CD4-positive, alpha-beta T cell (primary cell): ENCODE measurements at regions of chr1 and their contacts with region 1.

Region 1: GRCh38 chr1:8409106-8409505 is 91.2 kb downstream of the SLC45A1 start:
- DNase-seq: peak in 3 of 14 experiments; percentile 49 to 72 (median 63)
- ATAC-seq: peak; percentile 79
- H3K4me3 ChIP-seq: no peak overlapping the region
- H3K4me3 Mint-ChIP-seq: peak overlapping the region; percentile 65
- H3K27ac ChIP-seq: peak overlapping the region; percentile 19 to 23
- H3K27ac Mint-ChIP-seq: peak overlapping the region; percentile 69
- H3K4me1 ChIP-seq: peaks cover 69% of the 10 kb centered on the region
- H3K4me1 Mint-ChIP-seq: peaks cover 76% of the 10 kb centered on the region
- H3K27me3 ChIP-seq: no peaks in the 10 kb centered on the region
- H3K27me3 Mint-ChIP-seq: no peaks in the 10 kb centered on the region
- CTCF ChIP-seq: peak; percentile 48

Region 2: GRCh38 chr1:8396786-8397406 is 12.2 kb before region 1 on chr1:
- CTCF ChIA-PET with region 1: interaction called, 25 read pairs
- POLR2A ChIA-PET with region 1: interaction called, 5 read pairs
- intact Hi-C with region 1: no loop called
- DNase-seq: peak in 3 of 14 experiments; percentile 32 to 46 (median 35)
- ATAC-seq: peak; percentile 61
- H3K4me3 ChIP-seq: no peak overlapping the region
- H3K4me3 Mint-ChIP-seq: peak overlapping the region; percentile 39
- H3K27ac ChIP-seq: peak overlapping the region; percentile 8 to 18
- H3K27ac Mint-ChIP-seq: peak overlapping the region; percentile 88
- H3K4me1 ChIP-seq: peaks cover 52% of the 10 kb centered on the region
- H3K4me1 Mint-ChIP-seq: peaks cover 75% of the 10 kb centered on the region
- H3K27me3 ChIP-seq: no peaks in the 10 kb centered on the region
- H3K27me3 Mint-ChIP-seq: no peaks in the 10 kb centered on the region
- CTCF ChIP-seq: no peak

Region 3: GRCh38 chr1:8431019-8431418 is 21.9 kb after region 1 on chr1:
- CTCF ChIA-PET with region 1: interaction called, 13 read pairs
- POLR2A ChIA-PET with region 1: interaction called, 4 read pairs
- intact Hi-C with region 1: no loop called
- DNase-seq: peak in 12 of 14 experiments; percentile 22 to 74 (median 43)
- ATAC-seq: peak; percentile 87
- H3K4me3 ChIP-seq: no peak overlapping the region
- H3K4me3 Mint-ChIP-seq: peak overlapping the region; percentile 66
- H3K27ac ChIP-seq: peak overlapping the region; percentile 24 to 53
- H3K27ac Mint-ChIP-seq: peak overlapping the region; percentile 88
- H3K4me1 ChIP-seq: peaks cover 58% of the 10 kb centered on the region
- H3K4me1 Mint-ChIP-seq: peaks cover 68% of the 10 kb centered on the region
- H3K27me3 ChIP-seq: no peaks in the 10 kb centered on the region
- H3K27me3 Mint-ChIP-seq: no peaks in the 10 kb centered on the region
- CTCF ChIP-seq: peak; percentile 56

Region 4: DNA sequence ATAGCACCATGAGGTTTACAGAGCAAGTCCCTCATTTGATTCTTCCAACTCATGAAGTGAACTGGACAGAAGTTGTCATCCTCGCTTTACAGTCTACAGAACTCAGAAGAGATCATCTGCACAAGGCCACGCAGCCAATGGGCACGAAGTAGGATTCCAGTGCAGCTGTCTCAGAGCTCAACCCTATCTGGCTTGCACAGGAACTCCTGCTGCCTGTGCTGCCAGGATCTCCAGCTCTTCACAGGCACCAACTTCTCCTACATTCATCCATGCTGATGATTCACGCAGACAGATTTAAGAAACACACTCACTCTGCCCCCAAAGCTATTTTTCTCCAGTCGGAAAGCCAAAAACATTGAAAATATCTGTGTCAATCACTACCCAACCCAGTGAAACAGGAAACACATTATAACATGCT is 251.3 kb after region 1 on chr1:
- CTCF ChIA-PET with region 1: no interaction called
- POLR2A ChIA-PET with region 1: no interaction called
- intact Hi-C with region 1: loop called in 1 of 2 experiments (anchors 10 kb)
- DNase-seq: no peak
- ATAC-seq: no peak
- H3K4me3 ChIP-seq: no peak overlapping the region
- H3K4me3 Mint-ChIP-seq: no peak overlapping the region
- H3K27ac ChIP-seq: no peak overlapping the region
- H3K27ac Mint-ChIP-seq: no peak overlapping the region
- H3K4me1 ChIP-seq: peaks cover 34% of the 10 kb centered on the region
- H3K4me1 Mint-ChIP-seq: no peaks in the 10 kb centered on the region
- H3K27me3 ChIP-seq: no peaks in the 10 kb centered on the region
- H3K27me3 Mint-ChIP-seq: no peaks in the 10 kb centered on the region
- CTCF ChIP-seq: no peak